Activated CD4-positive, alpha-beta memory T cell treated with anti-CD3 and anti-CD28 coated beads for 36 hours (primary cell): ENCODE measurements at regions of chr22 and their contacts with region 1.

Region 1: GRCh38 chr22:45441138-45441537 is 27.6 kb downstream of the RIBC2 start:
- DNase-seq: peak; percentile 55
- H3K4me3 Mint-ChIP-seq: peak overlapping the region; percentile 17
- H3K27ac Mint-ChIP-seq: no peak overlapping the region
- H3K4me1 Mint-ChIP-seq: peaks cover 11% of the 10 kb centered on the region
- H3K27me3 Mint-ChIP-seq: peaks cover 1% of the 10 kb centered on the region

Region 2: DNA sequence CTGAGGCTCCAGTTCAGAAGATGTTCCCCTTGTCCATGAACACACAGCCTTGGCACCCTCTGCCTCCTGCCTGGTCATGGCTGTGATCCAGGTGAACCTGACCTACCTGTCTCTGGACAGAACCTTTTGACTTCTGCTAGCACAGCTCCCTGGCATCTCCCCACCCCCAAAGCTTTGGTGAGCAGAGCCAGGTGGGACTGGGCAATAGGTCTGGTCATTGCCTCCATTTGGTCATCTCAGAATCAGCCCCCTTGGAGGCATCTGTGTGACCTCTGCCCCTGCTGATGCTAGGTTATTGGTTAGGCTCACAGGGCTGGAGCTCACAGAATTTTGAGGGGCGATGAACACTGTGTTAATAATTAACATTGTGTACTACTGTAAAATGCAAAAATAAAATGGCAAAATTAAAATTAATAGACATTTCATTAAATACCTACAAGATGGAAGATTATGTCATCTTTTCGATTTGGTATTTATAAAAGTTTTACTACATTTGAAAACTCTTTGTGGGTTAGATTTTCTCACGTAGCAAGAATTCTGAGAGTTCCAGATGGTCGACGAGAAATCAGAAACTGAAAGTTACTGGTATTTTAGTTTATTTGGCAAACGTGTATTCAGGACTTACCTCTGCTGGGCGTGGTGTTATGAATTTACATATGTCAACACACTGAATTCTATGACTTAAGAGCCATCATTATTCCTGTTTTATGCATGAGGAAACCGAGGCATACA is 192.1 kb before region 1 on chr22:
- CTCF ChIA-PET with region 1: no interaction called
- POLR2A ChIA-PET with region 1: no interaction called
- intact Hi-C with region 1: no loop called
- DNase-seq: no peak
- H3K4me3 Mint-ChIP-seq: no peak overlapping the region
- H3K27ac Mint-ChIP-seq: no peak overlapping the region
- H3K4me1 Mint-ChIP-seq: peaks cover 23% of the 10 kb centered on the region
- H3K27me3 Mint-ChIP-seq: no peaks in the 10 kb centered on the region

Region 3: GRCh38 chr22:45261407-45262088 is 179.6 kb before region 1 on chr22:
- CTCF ChIA-PET with region 1: no interaction called
- POLR2A ChIA-PET with region 1: no interaction called
- intact Hi-C with region 1: no loop called
- DNase-seq: no peak
- H3K4me3 Mint-ChIP-seq: no peak overlapping the region
- H3K27ac Mint-ChIP-seq: no peak overlapping the region
- H3K4me1 Mint-ChIP-seq: no peaks in the 10 kb centered on the region
- H3K27me3 Mint-ChIP-seq: peaks cover 5% of the 10 kb centered on the region

Region 4: GRCh38 chr22:45553351-45554039 is 112.4 kb after region 1 on chr22:
- CTCF ChIA-PET with region 1: interaction called, 3 read pairs
- POLR2A ChIA-PET with region 1: no interaction called
- intact Hi-C with region 1: loop called (anchors 2 kb)
- DNase-seq: peak; percentile 66
- H3K4me3 Mint-ChIP-seq: no peak overlapping the region
- H3K27ac Mint-ChIP-seq: no peak overlapping the region
- H3K4me1 Mint-ChIP-seq: peaks cover 2% of the 10 kb centered on the region
- H3K27me3 Mint-ChIP-seq: peaks cover 9% of the 10 kb centered on the region